ENCODE measurements at regions of chr5 and their contacts with region 1.

Region 1: DNA sequence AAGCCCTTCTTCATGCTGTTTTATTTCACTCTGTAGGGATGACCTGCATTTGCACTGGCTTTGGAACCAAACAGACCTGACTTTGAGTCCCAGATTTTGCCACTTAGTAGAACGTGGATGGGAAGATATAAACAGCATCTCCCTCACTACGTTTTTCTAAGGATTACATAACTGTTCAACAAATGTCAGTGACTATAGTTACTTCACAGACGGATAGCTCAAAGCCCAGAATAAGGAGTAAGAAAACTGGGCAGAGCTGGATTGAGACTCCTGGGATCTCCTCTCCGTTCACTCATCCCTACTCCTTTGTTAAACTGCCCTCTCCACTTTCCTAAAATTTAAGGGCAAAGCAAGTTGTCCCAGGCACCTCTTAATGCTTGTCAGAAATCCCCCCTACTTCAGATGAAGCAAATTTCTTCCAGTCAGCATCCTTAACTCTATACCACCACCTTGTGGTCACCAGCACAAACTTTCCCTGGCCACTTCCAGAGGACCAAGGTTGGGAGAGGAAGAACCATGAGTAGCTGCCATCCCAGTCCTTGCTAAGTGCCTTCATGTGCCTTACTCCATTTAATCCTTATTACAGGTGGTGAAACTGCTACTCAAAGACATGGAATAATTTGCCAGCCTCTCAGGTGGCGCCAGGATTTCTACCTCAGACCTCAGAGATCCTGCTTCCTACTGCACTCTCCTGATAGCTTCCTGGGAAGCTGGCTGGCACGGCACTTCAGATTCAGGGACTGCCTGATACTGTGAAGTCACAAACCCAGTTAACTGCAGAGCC is 38.4 kb downstream of the EGR1 start:
- DNase-seq: no peak
- ATAC-seq: peak; percentile 71
- H3K4me3 ChIP-seq: no peak overlapping the region
- H3K27ac ChIP-seq: no peak overlapping the region
- H3K4me1 ChIP-seq: no peaks in the 10 kb centered on the region
- H3K27me3 ChIP-seq: no peaks in the 10 kb centered on the region

Region 2: DNA sequence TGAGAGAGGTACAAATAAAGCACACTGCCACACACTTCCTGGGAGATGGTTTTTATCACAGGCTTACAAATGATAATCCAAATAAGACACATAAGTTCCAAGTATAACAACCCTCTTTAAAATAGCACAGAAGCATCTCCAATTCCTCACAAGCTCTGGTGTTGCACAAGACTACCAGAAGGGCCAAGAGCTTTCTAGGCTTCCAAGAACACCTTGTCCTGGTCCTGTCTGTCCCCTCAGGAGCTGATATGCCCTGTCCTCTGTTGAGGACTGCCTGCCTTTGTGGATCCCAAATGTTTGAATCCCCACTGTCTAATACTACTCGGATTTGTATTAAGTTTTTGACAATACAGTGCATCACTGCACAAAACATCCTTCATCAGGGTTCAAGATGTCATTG is 1114.6 kb before region 1 on chr5:
- intact Hi-C with region 1: no loop called
- DNase-seq: no peak
- ATAC-seq: peak; percentile 51 to 74
- H3K4me3 ChIP-seq: no peak overlapping the region
- H3K27ac ChIP-seq: no peak overlapping the region
- H3K4me1 ChIP-seq: peaks cover 6% of the 10 kb centered on the region
- H3K27me3 ChIP-seq: no peaks in the 10 kb centered on the region

Region 3: GRCh38 chr5:138408023-138408422 is 95.7 kb before region 1 on chr5:
- intact Hi-C with region 1: no loop called
- DNase-seq: no peak
- ATAC-seq: no peak
- H3K4me3 ChIP-seq: no peak overlapping the region
- H3K27ac ChIP-seq: no peak overlapping the region
- H3K4me1 ChIP-seq: no peaks in the 10 kb centered on the region
- H3K27me3 ChIP-seq: no peaks in the 10 kb centered on the region

Region 4: GRCh38 chr5:138449501-138450239 is 54.0 kb before region 1 on chr5:
- intact Hi-C with region 1: loop called in 3 of 4 experiments (anchors 2 to 5 kb)
- DNase-seq: peak; percentile 91 to 97 (median 95)
- ATAC-seq: peak; percentile 88 to 90
- H3K4me3 ChIP-seq: no peak overlapping the region
- H3K27ac ChIP-seq: no peak overlapping the region
- H3K4me1 ChIP-seq: no peaks in the 10 kb centered on the region
- H3K27me3 ChIP-seq: no peaks in the 10 kb centered on the region